Activated CD4-positive, alpha-beta memory T cell treated with anti-CD3 and anti-CD28 coated beads for 36 hours (primary cell): ENCODE measurements at regions of chr22 and their contacts with region 1.

Region 1: GRCh38 chr22:25702040-25702439 is 39.9 kb upstream of the MYO18B start:
- DNase-seq: no peak
- H3K4me3 Mint-ChIP-seq: no peak overlapping the region
- H3K27ac Mint-ChIP-seq: no peak overlapping the region
- H3K4me1 Mint-ChIP-seq: peaks cover 13% of the 10 kb centered on the region
- H3K27me3 Mint-ChIP-seq: no peaks in the 10 kb centered on the region

Region 2: DNA sequence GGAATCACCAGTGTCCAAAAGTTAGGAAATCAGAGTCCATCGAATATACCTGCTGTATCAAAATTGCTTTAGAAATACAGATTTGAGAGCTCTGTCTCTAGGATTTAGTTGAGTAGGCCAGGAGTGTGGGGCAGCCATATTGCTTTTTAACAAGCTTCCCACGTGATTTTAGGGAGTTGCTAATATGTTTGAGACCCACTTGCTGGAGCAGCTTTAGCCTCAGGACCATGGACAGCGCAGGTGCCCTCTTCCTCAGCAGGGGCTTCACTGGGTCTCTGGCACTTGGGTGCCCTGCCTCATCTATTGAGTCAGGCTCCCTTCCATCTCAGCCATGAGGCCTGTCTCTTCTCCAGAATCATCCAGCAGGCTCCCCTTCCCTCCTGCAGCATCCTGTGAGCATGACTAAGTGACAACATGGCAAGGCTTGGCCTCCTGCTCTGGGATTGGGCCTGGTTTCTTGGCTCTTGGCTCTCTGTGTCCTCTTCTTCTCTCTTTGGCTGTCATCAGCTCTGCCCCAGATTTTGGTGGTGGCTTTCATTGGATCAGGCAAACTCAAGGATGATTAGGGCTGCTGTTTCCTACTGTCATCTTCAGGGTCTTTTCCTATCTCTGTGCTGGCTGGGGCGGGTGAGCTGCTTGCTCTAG is 826.1 kb before region 1 on chr22:
- CTCF ChIA-PET with region 1: no interaction called
- POLR2A ChIA-PET with region 1: no interaction called
- intact Hi-C with region 1: no loop called
- DNase-seq: peak; percentile 34
- H3K4me3 Mint-ChIP-seq: no peak overlapping the region
- H3K27ac Mint-ChIP-seq: no peak overlapping the region
- H3K4me1 Mint-ChIP-seq: no peaks in the 10 kb centered on the region
- H3K27me3 Mint-ChIP-seq: no peaks in the 10 kb centered on the region

Region 3: DNA sequence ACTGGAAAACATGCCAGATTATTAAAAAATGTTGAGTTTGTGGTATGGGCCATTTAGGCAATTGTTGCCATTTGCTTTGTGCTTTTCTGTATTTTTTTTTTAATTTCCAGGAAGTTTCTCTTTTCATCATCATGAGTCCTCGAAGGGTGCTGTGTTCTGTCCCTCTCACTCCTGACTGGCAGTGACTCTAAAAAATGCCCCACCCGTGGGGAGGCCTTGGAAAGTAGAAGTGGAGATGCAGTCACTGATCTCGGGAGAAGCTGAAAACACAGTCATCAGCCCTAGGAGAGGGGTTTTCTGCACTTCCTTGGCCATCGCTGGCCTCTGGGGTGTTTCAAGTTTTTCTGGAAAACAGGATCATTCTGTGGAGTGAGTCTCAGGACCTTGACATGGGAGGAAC is 236.1 kb before region 1 on chr22:
- CTCF ChIA-PET with region 1: interaction called, 18 read pairs
- POLR2A ChIA-PET with region 1: no interaction called
- intact Hi-C with region 1: loop called (anchors 1 kb)
- DNase-seq: no peak
- H3K4me3 Mint-ChIP-seq: no peak overlapping the region
- H3K27ac Mint-ChIP-seq: no peak overlapping the region
- H3K4me1 Mint-ChIP-seq: no peaks in the 10 kb centered on the region
- H3K27me3 Mint-ChIP-seq: no peaks in the 10 kb centered on the region

Region 4: GRCh38 chr22:25772288-25772687 is 70.2 kb after region 1 on chr22:
- CTCF ChIA-PET with region 1: interaction called, 7 read pairs
- POLR2A ChIA-PET with region 1: no interaction called
- intact Hi-C with region 1: loop called (anchors 2 kb)
- DNase-seq: no peak
- H3K4me3 Mint-ChIP-seq: no peak overlapping the region
- H3K27ac Mint-ChIP-seq: no peak overlapping the region
- H3K4me1 Mint-ChIP-seq: peaks cover 9% of the 10 kb centered on the region
- H3K27me3 Mint-ChIP-seq: peaks cover 7% of the 10 kb centered on the region

Region 5: DNA sequence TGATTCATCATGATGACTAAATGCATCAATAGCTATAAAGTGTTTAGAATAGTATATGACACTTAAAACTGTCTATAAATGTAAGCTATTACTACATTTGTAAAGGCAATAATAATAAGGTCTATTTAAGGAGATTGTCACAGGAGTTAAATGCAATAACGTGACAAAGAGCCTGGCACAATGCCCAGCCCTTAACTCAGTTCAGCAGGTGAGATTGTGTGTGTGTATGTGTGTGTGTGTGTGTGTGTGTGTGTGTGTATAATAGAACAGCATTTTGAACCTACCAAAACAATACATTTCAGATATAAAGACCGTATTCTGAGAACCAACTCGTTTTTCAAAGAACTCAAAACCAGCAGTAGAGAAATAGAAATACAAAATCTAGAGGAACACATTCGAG is 217.4 kb after region 1 on chr22:
- CTCF ChIA-PET with region 1: no interaction called
- POLR2A ChIA-PET with region 1: no interaction called
- intact Hi-C with region 1: no loop called
- DNase-seq: no peak
- H3K4me3 Mint-ChIP-seq: no peak overlapping the region
- H3K27ac Mint-ChIP-seq: no peak overlapping the region
- H3K4me1 Mint-ChIP-seq: no peaks in the 10 kb centered on the region
- H3K27me3 Mint-ChIP-seq: peaks cover 16% of the 10 kb centered on the region